CD14-positive monocyte (primary cell): ENCODE measurements at regions of chr17 and their contacts with region 1.

Region 1: GRCh38 chr17:49997791-49998703 is 3.0 kb upstream of the DLX3 start:
- DNase-seq: peak; percentile 74 to 84 (median 80)
- H3K4me3 ChIP-seq: no peak overlapping the region
- H3K4me3 Mint-ChIP-seq: peak overlapping the region in 1 of 2 donors; percentile 67
- H3K27ac ChIP-seq: no peak overlapping the region
- H3K27ac Mint-ChIP-seq: no peak overlapping the region
- H3K4me1 ChIP-seq: peaks cover 13 to 35% of the 10 kb centered on the region in 2 donors
- H3K4me1 Mint-ChIP-seq: peaks cover 27% of the 10 kb centered on the region
- H3K27me3 ChIP-seq: peaks cover 45 to 78% of the 10 kb centered on the region in 2 donors
- H3K27me3 Mint-ChIP-seq: peaks cover 70 to 87% (median 80%) of the 10 kb centered on the region in 3 donors
- CTCF ChIP-seq: peak; percentile 98

Region 2: DNA sequence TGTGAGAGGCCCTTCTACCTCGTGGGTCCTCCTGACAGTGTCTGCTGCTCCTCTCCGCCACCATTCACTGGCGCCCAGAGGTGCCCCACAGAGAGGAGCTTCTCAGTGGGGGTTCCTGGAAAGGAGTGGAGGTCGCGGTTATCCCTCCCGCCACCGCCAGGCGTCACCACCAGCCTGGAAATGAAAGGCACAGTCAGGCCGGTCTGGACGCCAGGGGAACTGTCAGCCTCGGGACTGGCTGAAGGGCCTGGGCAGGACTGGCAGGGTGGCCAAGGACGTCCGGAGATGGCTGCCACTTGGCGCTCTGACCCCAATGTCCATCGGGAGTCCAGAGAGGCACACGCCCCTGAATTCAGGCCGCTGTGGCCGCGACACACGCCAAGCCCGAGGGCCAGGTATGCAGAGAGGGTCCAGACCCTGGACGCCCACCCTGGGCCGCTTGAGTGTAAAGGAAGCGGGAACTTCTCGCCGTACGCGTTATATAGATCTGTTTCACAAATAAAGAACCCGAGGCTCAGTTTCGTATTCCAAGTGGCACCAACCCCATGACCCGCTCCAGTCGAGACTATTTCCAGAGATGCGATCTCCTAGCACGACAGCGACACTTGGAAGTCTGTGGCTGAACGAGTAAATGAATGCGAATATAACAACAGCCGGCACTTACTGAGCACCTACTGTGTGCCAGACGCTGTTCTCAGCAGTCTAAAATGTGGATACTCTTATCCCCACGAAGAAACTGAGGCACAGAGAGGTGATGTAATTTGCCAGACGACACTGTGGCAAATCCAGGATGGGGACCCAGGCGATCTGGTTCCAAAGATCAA is 430.0 kb before region 1 on chr17:
- intact Hi-C with region 1: loop called (anchors 5 to 10 kb)
- DNase-seq: peak; percentile 80 to 83 (median 82)
- H3K4me3 ChIP-seq: peak overlapping the region; percentile 5 to 76 (median 39)
- H3K4me3 Mint-ChIP-seq: peak overlapping the region; percentile 79 to 87
- H3K27ac ChIP-seq: no peak overlapping the region
- H3K27ac Mint-ChIP-seq: peak overlapping the region in 2 of 7 donors; percentile 37 to 60
- H3K4me1 ChIP-seq: peaks cover 14 to 18% of the 10 kb centered on the region in 2 donors
- H3K4me1 Mint-ChIP-seq: peaks cover 17% of the 10 kb centered on the region
- H3K27me3 ChIP-seq: peaks cover 3 to 34% of the 10 kb centered on the region in 2 donors
- H3K27me3 Mint-ChIP-seq: peaks cover 39 to 53% (median 48%) of the 10 kb centered on the region in 3 donors
- CTCF ChIP-seq: peak; percentile 97

Region 3: DNA sequence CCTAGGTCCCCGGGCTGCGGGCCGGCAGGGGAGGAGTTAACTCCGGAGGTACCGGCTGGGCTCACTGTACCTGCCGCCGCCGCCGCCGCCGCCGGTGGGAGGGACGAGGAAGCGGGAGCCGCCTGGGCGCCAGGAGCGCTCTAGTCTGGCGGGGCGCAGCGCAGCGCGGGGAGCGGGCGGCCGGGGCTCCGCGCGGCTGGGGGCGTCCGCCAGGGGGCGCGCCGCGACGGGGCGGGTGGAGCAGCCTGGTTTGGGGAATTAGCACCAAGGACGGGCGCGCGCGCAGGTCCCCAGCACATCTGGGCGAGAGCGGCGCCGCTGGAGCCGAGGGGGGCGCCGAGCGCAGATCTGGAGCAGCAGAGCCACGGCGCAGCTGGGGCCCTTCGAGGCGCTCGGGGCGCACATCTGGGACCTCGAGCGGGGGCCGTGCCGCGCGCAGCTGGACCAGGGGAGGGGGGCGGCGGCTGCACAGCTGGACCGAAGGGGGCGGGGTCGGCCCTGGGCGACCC is 422.4 kb before region 1 on chr17 and contains the start of gene NXPH3:
- intact Hi-C with region 1: loop called in 1 of 2 experiments (anchors 10 kb)
- DNase-seq: peak; percentile 28 to 53 (median 33)
- H3K4me3 ChIP-seq: peak within 1 kb of the TSS in 1 of 3 experiments; percentile 68
- H3K4me3 Mint-ChIP-seq: peak within 1 kb of the TSS; percentile 63 to 89
- H3K27ac ChIP-seq: no peak within 1 kb of the TSS
- H3K27ac Mint-ChIP-seq: no peak within 1 kb of the TSS
- H3K4me1 ChIP-seq: peaks cover 10 to 19% of the 10 kb centered on the region in 2 donors
- H3K4me1 Mint-ChIP-seq: peaks cover 11% of the 10 kb centered on the region
- H3K27me3 ChIP-seq: peaks cover 16 to 72% of the 10 kb centered on the region in 2 donors
- H3K27me3 Mint-ChIP-seq: peaks cover 64 to 83% (median 70%) of the 10 kb centered on the region in 3 donors
- CTCF ChIP-seq: peak; percentile 60
- polyA plus RNA-seq, gene NXPH3: not detected

Region 4: GRCh38 chr17:49861150-49861892 is 136.7 kb before region 1 on chr17:
- intact Hi-C with region 1: loop called (anchors 1 kb)
- DNase-seq: peak; percentile 21 to 62 (median 50)
- H3K4me3 ChIP-seq: no peak overlapping the region
- H3K4me3 Mint-ChIP-seq: peak overlapping the region in 1 of 2 donors; percentile 65
- H3K27ac ChIP-seq: no peak overlapping the region
- H3K27ac Mint-ChIP-seq: peak overlapping the region in 1 of 7 donors; percentile 40
- H3K4me1 ChIP-seq: peaks cover 6 to 11% of the 10 kb centered on the region in 2 donors
- H3K4me1 Mint-ChIP-seq: peaks cover 17% of the 10 kb centered on the region
- H3K27me3 ChIP-seq: peaks cover 0 to 11% of the 10 kb centered on the region in 2 donors
- H3K27me3 Mint-ChIP-seq: peaks cover 9 to 26% (median 14%) of the 10 kb centered on the region in 3 donors
- CTCF ChIP-seq: peak; percentile 98

Region 5: GRCh38 chr17:49880291-49881053 is 117.6 kb before region 1 on chr17:
- intact Hi-C with region 1: loop called (anchors 2 kb)
- DNase-seq: peak; percentile 45 to 57 (median 54)
- H3K4me3 ChIP-seq: no peak overlapping the region
- H3K4me3 Mint-ChIP-seq: peak overlapping the region in 1 of 2 donors; percentile 75
- H3K27ac ChIP-seq: no peak overlapping the region
- H3K27ac Mint-ChIP-seq: no peak overlapping the region
- H3K4me1 ChIP-seq: peaks cover 4 to 5% of the 10 kb centered on the region in 2 donors
- H3K4me1 Mint-ChIP-seq: peaks cover 6% of the 10 kb centered on the region
- H3K27me3 ChIP-seq: peaks cover 21 to 46% of the 10 kb centered on the region in 2 donors
- H3K27me3 Mint-ChIP-seq: peaks cover 44 to 70% (median 69%) of the 10 kb centered on the region in 3 donors
- CTCF ChIP-seq: peak; percentile 98

Region 6: DNA sequence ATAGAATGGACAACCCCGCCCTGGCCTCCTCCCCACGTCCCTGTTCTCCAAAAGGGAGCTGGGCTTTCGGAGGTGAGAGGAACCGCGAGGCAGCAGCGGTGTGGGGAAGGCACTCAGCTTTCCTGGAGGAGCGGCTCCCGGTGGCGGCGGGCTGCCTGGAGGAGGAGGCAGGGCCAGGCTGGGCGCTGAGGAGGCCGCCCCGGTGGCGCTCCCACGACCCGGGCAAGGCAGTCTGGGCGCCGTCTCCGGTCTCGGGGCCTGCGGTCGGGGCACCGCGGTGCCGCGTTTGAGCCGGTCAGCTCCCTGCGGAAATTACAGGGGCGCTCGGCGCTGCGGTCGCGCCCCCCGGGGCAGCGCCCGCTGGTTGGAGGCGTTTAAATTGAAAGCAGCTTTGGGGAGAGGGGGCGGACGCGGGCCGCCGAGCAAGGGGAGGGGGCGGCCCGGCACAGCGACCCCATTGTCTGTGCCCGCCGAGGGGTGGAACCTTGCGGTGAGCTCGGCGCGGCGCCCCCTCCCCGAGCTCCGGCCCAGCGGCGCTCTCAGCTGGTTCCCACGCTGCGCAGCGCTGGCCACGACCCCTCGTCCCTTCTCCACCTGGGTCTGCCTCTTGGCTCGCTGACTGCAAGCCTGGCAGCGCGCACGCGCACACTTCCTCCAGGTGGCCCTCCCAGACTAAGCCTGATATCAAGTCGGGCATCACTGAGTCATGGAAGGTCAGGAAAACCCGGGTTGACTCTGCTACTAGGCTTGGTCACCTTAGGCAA is 87.8 kb before region 1 on chr17:
- intact Hi-C with region 1: no loop called
- DNase-seq: peak in 1 of 3 donors; percentile 17
- H3K4me3 ChIP-seq: no peak overlapping the region
- H3K4me3 Mint-ChIP-seq: peak overlapping the region in 1 of 2 donors; percentile 73
- H3K27ac ChIP-seq: no peak overlapping the region
- H3K27ac Mint-ChIP-seq: no peak overlapping the region
- H3K4me1 ChIP-seq: no peaks in the 10 kb centered on the region
- H3K4me1 Mint-ChIP-seq: peaks cover 4% of the 10 kb centered on the region
- H3K27me3 ChIP-seq: peaks cover 25 to 82% of the 10 kb centered on the region in 2 donors
- H3K27me3 Mint-ChIP-seq: peaks cover 81 to 97% (median 87%) of the 10 kb centered on the region in 3 donors
- CTCF ChIP-seq: no peak

Region 7: DNA sequence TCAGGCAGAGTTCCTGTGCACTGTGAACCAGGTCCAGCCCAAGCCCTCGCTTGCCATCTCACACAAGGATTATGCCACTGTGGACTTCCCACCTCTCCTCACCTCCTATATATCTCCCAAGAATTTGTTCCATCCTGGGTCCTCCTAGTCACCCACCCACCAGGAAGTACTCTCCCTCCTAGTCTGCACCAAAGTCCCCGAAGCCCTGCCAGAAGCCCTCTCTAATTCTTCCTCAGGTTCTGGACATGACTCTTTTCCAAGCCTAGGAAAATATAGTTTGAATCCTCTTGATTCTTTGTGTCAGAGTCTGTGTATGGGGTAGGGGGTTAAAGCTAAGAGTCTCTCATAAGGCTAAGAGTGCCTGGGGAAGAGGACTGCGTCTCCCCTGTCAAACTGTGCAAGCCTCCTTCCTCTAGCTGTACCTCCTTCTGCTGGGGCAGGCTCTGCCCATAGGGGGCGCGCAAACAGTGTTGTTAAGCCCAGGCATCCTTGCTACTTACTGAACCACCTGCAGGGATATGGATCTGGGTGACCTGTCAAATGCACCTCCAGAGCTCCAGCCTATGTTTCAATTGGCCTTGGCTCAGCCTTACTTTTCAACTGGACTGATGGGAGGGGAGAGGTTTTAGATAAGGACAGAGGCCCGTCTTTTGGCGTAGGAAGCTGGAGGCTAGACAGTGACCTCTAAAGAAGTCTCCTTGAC is 45.7 kb before region 1 on chr17:
- intact Hi-C with region 1: loop called (anchors 1 kb)
- DNase-seq: peak; percentile 65 to 73 (median 70)
- H3K4me3 ChIP-seq: no peak overlapping the region
- H3K4me3 Mint-ChIP-seq: peak overlapping the region in 1 of 2 donors; percentile 60
- H3K27ac ChIP-seq: no peak overlapping the region
- H3K27ac Mint-ChIP-seq: no peak overlapping the region
- H3K4me1 ChIP-seq: no peaks in the 10 kb centered on the region
- H3K4me1 Mint-ChIP-seq: peaks cover 6% of the 10 kb centered on the region
- H3K27me3 ChIP-seq: peaks cover 7 to 55% of the 10 kb centered on the region in 2 donors
- H3K27me3 Mint-ChIP-seq: peaks cover 53 to 76% (median 59%) of the 10 kb centered on the region in 3 donors
- CTCF ChIP-seq: peak; percentile 96

Region 8: DNA sequence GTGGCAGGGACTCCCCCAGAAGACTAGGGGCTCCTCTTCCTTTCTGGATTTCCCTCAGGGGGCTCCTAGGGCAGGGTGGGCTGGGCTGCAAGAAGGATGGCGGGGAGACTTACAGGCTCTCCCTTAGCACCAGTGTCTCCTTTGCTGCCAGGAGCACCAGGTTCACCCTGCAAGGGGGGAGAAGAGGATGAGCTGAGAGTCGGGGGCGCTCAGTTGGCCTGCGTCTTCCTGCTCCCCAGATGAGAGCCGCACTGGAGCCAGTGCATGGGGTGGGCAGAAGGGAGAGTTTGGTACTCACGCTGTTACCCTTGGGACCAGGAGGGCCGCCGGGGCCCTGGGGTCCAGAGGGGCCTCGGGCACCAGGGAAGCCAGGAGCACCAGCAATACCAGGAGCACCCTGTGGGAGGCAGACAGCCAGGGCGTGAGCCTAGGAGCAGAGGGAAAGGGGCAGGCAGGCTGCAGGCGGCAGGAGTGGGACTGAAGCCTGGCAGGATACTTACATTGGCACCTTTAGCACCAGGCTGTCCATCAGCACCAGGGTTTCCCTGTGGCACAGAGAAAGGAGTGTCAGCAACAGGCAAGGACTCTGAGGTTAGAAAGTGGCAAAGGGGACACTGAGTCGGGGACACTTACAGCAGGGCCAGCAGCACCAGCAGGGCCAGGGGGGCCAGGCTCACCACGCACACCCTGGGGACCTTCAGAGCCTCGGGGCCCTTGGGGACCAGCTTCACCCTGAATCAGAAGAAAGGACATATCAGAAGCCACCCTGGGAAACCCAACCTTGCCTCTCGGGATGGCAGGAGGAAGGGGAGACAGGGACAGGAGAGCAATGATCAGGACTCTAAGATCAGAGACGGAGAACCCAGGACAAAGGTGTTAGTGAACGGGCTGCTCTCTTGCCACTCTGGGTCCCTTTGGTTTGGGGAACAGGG is 197.2 kb after region 1 on chr17:
- intact Hi-C with region 1: no loop called
- DNase-seq: no peak
- H3K4me3 ChIP-seq: no peak overlapping the region
- H3K4me3 Mint-ChIP-seq: no peak overlapping the region
- H3K27ac ChIP-seq: no peak overlapping the region
- H3K27ac Mint-ChIP-seq: no peak overlapping the region
- H3K4me1 ChIP-seq: peaks cover 6 to 8% of the 10 kb centered on the region in 2 donors
- H3K4me1 Mint-ChIP-seq: peaks cover 8% of the 10 kb centered on the region
- H3K27me3 ChIP-seq: peaks cover 0 to 14% of the 10 kb centered on the region in 2 donors
- H3K27me3 Mint-ChIP-seq: peaks cover 18 to 43% (median 33%) of the 10 kb centered on the region in 3 donors
- CTCF ChIP-seq: no peak